ENCODE measurements at regions of chr14 and their contacts with region 1.

Region 1: GRCh38 chr14:93946104-93946503 is 19.0 kb downstream of the FAM181A start:
- DNase-seq: no peak
- H3K4me3 ChIP-seq: no peak overlapping the region
- CTCF ChIP-seq: no peak
- POLR2A ChIP-seq: no peak

Region 2: GRCh38 chr14:93911975-93912615 is 34.0 kb before region 1 on chr14:
- intact Hi-C with region 1: loop called (anchors 1 kb)
- DNase-seq: no peak
- H3K4me3 ChIP-seq: no peak overlapping the region
- CTCF ChIP-seq: no peak
- POLR2A ChIP-seq: no peak